SK-N-SH (cell line): ENCODE measurements at regions of chr14 and their contacts with region 1.

Region 1: DNA sequence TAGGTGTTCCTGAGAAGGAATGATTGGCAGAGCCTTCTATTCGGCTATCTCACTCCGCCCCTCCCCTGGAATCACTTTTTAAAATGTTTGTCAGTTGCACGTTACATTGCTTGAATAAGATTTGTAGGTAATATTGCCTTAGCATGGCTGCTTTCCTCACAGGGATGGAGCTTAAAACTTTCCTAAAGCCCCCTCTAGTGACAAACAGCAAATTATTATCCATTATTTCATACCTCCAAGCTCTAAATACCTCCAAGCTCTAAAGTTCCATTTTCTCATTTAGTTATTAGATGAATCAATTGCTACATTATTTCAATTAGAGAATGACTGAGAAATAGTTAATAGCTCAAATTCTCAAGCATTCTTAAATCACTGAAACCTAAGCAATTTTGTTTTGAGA is 5.1 kb upstream of the SPATA7 start:
- DNase-seq: peak; percentile 22
- H3K4me3 ChIP-seq: no peak overlapping the region
- H3K27ac ChIP-seq: no peak overlapping the region
- H3K4me1 ChIP-seq: peaks cover 0 to 3% of the 10 kb centered on the region in 2 experiments; a peak in 1 of 4 replicates
- H3K27me3 ChIP-seq: no peaks in the 10 kb centered on the region
- CTCF ChIP-seq: peak; percentile 44
- EP300 ChIP-seq: no peak
- RAD21 ChIP-seq: peak; percentile 66

Region 2: GRCh38 chr14:88364710-88365413 is 15.5 kb before region 1 on chr14:
- CTCF ChIA-PET with region 1: interaction called, 19 read pairs
- POLR2A ChIA-PET with region 1: no interaction called
- DNase-seq: no peak
- H3K4me3 ChIP-seq: no peak overlapping the region
- H3K27ac ChIP-seq: no peak overlapping the region
- H3K4me1 ChIP-seq: no peaks in the 10 kb centered on the region
- H3K27me3 ChIP-seq: no peaks in the 10 kb centered on the region
- CTCF ChIP-seq: no peak
- EP300 ChIP-seq: no peak
- RAD21 ChIP-seq: no peak

Region 3: DNA sequence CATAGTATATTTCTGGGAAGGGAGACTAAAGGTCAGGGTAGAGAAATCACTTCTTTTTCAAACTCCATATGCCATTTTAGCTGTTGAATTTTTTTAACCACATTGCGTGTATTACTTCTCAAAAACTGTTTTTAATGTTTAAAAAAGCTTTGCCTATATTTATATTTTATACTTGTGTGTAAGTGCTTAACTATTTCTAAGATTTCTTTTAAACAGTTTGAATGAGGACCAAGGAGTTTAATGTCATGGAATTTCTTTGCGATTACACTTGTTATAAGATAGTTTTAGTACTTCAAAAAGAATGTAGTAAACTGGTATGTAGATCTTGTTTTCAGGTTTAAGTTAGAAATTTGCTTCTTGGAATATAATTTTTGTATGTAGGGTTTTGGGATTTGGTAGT is 12.2 kb after region 1 on chr14:
- CTCF ChIA-PET with region 1: interaction called, 15 read pairs
- POLR2A ChIA-PET with region 1: no interaction called
- DNase-seq: no peak
- H3K4me3 ChIP-seq: no peak overlapping the region
- H3K27ac ChIP-seq: no peak overlapping the region
- H3K4me1 ChIP-seq: no peaks in the 10 kb centered on the region
- H3K27me3 ChIP-seq: no peaks in the 10 kb centered on the region
- CTCF ChIP-seq: no peak
- EP300 ChIP-seq: no peak
- RAD21 ChIP-seq: no peak